OCI-LY7 (cell line): ENCODE measurements at regions of chr6 and their contacts with region 1.

Region 1: GRCh38 chr6:18503593-18504231 is 116.6 kb downstream of the RNF144B start:
- DNase-seq: peak; percentile 89
- H3K4me3 ChIP-seq: peak overlapping the region; percentile 45
- H3K27ac ChIP-seq: no peak overlapping the region
- H3K4me1 ChIP-seq: peaks cover 15% of the 10 kb centered on the region
- CTCF ChIP-seq: peak; percentile 100

Region 2: DNA sequence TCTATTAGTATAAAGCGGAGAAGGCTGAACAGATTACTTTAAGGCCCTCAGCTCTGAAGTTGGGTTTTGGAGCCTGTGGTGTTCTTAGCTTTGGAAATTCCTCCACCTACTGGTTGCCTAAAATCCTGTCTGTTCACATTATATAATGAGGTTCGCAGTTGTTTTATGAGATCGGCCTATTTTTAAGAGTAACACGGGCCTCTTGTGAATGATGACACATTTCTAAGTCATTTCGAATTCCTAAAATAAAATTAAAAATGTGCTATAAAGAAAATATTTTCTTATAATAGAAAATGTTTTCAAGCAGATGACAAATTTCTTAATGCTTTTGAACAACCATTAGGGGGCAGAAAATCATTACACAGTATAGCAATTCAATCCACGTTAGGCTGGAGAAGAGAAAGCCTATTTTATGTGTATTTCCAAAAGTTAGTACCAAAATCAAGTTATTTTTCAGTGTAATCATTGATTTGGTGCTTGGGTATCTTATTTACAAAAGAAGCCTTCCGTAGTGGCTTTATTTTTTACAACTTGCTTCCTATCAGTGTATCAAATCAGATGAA is 919.4 kb before region 1 on chr6:
- CTCF ChIA-PET with region 1: no interaction called
- POLR2A ChIA-PET with region 1: no interaction called
- intact Hi-C with region 1: loop called (anchors 10 kb)
- DNase-seq: peak; percentile 62
- H3K4me3 ChIP-seq: no peak overlapping the region
- H3K27ac ChIP-seq: no peak overlapping the region
- H3K4me1 ChIP-seq: peaks cover 3% of the 10 kb centered on the region
- CTCF ChIP-seq: peak; percentile 100

Region 3: DNA sequence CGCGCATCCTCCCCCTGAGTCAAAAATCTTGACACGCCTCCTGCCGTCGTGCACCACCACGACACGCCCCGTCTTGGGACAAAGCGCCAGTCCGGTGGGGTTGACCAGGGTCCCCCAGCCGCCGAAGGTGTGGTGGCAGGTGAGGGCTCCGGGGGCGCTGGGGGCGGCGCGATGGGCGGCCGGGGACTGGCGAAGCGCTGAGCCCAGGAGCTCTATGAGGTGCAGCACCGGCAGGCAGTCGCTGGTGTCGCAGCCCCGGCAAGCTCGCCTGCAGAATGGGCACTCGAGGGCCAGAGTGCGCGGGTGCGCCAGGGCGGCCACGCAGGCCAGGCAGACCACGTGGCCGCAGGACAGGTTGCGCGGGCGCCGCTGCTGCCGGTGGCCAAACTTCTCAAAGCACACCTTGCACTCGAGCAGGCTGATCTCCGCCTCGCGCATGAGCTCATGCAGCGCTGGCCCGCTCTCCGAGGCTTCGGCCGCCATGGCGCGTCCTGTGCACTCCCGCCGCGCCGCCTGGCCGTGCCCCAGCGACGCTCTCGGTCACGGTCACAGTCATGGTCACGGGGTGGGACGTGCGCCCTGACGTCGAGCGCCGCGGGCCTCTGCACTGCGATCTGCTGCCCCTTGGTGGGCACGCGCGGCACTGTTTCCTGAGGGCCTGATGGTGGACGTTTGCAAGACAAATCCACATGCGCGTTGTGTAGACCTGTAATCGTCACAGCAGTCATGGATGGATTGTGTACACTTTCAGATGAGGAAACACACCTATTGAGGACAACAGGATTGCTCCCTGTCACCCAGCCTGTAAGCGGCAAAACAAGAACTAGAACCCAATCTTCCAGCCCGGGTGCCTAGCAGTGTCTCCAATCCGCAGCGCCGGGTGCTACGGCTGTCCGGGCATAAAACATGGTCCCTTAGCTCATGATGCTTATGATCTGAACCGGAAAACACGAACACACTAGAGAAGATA is 381.3 kb before region 1 on chr6 and contains the start of gene NHLRC1:
- CTCF ChIA-PET with region 1: no interaction called
- POLR2A ChIA-PET with region 1: no interaction called
- intact Hi-C with region 1: loop called (anchors 5 kb)
- DNase-seq: no peak
- H3K4me3 ChIP-seq: no peak within 1 kb of the TSS
- H3K27ac ChIP-seq: no peak within 1 kb of the TSS
- H3K4me1 ChIP-seq: no peaks in the 10 kb centered on the region
- CTCF ChIP-seq: no peak; the same call in 1 of the 2 replicates
- total RNA-seq, gene NHLRC1: not detected in 2 replicates

Region 4: GRCh38 chr6:18216411-18216810 is 287.3 kb before region 1 on chr6:
- CTCF ChIA-PET with region 1: no interaction called
- POLR2A ChIA-PET with region 1: no interaction called
- intact Hi-C with region 1: loop called (anchors 5 kb)
- DNase-seq: no peak
- H3K4me3 ChIP-seq: no peak overlapping the region
- H3K27ac ChIP-seq: no peak overlapping the region
- H3K4me1 ChIP-seq: peaks cover 22% of the 10 kb centered on the region
- CTCF ChIP-seq: no peak

Region 5: GRCh38 chr6:18264219-18264922 is 239.3 kb before region 1 on chr6 and contains the start of gene DEK:
- CTCF ChIA-PET with region 1: no interaction called
- POLR2A ChIA-PET with region 1: interaction called, 5 read pairs
- intact Hi-C with region 1: loop called (anchors 1 kb)
- DNase-seq: peak; percentile 86
- H3K4me3 ChIP-seq: peak within 1 kb of the TSS; percentile 90
- H3K27ac ChIP-seq: peak within 1 kb of the TSS; percentile 91
- H3K4me1 ChIP-seq: peaks cover 44% of the 10 kb centered on the region
- CTCF ChIP-seq: peak; percentile 73
- total RNA-seq, gene DEK: 235 and 462 TPM in 2 replicates

Region 6: DNA sequence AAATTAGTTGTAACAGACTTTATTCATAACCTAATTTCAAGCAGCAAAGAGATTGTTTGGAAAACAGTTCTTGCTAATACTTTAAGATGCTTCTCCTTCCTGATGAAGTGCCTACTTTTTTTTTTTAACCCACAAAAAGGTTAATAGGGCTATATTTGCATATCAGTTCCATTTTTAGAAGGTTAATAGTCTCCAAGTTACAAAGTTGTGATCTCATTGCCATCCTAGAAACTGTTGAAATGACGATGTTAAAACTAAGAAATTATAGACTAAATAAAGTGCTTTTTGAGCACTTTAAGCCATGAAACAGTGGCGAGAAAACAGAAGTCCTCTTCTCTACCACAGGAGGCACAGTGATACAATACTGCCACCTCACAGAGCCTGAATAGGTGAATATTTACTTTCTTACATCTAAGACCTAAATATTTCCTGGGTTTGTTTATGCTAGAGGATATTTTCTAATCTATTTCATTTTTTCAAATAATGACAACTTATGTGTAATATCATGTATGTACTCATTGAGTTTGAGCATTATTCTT is 111.3 kb before region 1 on chr6:
- CTCF ChIA-PET with region 1: interaction called, 3 read pairs
- POLR2A ChIA-PET with region 1: interaction called, 3 read pairs
- intact Hi-C with region 1: loop called (anchors 2 kb)
- DNase-seq: peak; percentile 51
- H3K4me3 ChIP-seq: peak overlapping the region; percentile 48
- H3K27ac ChIP-seq: peak overlapping the region; percentile 58
- H3K4me1 ChIP-seq: peaks cover 63% of the 10 kb centered on the region
- CTCF ChIP-seq: peak; percentile 75

Region 7: DNA sequence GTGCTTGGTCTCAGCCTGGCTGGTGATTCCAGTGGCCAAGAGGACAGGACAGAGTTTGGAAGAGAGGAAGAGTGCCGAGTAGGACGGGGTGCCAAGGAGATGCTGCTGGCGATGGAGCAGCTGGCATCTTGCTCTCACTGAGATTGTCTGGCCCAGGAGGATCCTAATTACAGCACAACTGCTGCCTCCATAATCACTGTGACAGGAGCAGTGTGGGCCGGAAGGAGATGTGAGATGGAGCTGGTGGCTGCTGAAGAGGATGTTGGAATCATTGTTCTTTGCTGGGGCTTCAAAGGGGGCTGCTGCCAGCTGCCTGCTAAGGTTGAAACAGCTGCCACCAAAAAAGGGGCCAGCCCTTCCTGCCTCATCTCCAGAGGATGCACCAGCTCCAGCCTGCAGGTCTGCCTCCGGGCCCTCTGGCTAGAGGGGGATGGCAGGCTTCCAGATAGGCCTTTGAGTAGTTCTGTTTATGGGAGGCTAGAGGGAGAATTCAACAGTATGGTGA is 97.9 kb after region 1 on chr6:
- CTCF ChIA-PET with region 1: no interaction called
- POLR2A ChIA-PET with region 1: no interaction called
- intact Hi-C with region 1: no loop called
- DNase-seq: no peak
- H3K4me3 ChIP-seq: no peak overlapping the region
- H3K27ac ChIP-seq: no peak overlapping the region
- H3K4me1 ChIP-seq: no peaks in the 10 kb centered on the region
- CTCF ChIP-seq: no peak

Region 8: GRCh38 chr6:18613319-18613925 is 109.7 kb after region 1 on chr6:
- CTCF ChIA-PET with region 1: no interaction called
- POLR2A ChIA-PET with region 1: no interaction called
- intact Hi-C with region 1: no loop called
- DNase-seq: no peak
- H3K4me3 ChIP-seq: no peak overlapping the region
- H3K27ac ChIP-seq: no peak overlapping the region
- H3K4me1 ChIP-seq: no peaks in the 10 kb centered on the region
- CTCF ChIP-seq: no peak

Region 9: DNA sequence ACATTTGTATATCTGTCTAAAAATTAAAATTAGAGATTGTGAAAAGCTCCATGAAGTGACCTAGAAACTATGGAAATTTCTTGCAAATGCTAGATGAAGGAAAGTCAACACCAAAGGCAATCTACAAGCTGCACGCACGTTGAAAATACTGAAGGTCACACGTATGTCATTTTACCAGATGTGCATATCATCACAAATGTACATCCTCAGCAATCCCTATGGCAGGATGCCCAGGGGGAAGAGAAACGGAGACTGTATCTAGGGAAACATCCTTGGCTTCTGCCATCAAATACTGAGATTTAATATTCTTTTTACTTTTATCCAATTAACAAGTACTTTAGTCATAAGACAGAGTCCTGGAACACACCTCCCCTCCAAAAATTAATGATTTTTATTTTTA is 555.4 kb after region 1 on chr6:
- CTCF ChIA-PET with region 1: no interaction called
- POLR2A ChIA-PET with region 1: no interaction called
- intact Hi-C with region 1: no loop called
- DNase-seq: no peak
- H3K4me3 ChIP-seq: no peak overlapping the region
- H3K27ac ChIP-seq: no peak overlapping the region
- H3K4me1 ChIP-seq: no peaks in the 10 kb centered on the region
- CTCF ChIP-seq: no peak